Activated CD8-positive, alpha-beta memory T cell treated with anti-CD3 and anti-CD28 coated beads, Interleukin-2, amount 10 ng/mL, durations not matched to agents 7 days and 5 days (primary cell): ENCODE measurements at regions of chr22 and their contacts with region 1.

Region 1: DNA sequence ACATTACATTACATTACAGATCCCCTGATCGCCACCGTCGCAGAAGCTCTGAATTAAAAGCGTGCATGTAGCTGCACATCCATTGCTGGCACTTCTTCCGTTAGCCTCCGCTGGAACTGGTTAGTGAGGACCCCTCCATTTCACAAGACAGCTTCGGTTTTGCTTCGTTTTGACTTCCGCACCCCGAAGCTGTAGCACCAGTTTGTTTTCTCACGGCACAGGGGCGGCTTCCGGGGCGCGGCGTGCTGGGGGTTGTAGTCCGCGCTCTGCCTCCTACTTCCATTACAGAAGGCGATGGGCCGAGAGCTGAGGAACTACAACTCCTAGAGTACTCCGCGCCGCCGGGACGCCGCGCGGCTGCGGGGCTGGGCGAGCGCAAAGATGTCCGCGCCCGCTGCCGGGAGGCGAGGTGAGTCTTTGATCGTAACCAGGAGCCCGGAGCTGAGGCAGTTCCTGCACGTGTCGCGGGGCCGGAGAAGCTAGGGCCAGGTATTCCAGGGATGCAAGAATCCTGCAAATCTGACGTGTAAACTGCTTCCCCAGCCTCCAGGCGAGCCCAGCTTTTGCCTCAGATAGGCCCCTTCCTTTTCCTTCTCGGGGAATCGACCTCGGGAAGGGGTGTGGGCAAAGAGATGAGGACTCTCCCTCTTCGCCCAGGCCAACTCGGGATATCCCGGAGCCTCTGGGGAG is at the start of gene PEX26:
- DNase-seq: peak; percentile 98
- ATAC-seq: peak; percentile 99
- H3K4me3 Mint-ChIP-seq: peak within 1 kb of the TSS; percentile 97
- H3K27ac Mint-ChIP-seq: peak within 1 kb of the TSS; percentile 100
- H3K4me1 Mint-ChIP-seq: peaks cover 46% of the 10 kb centered on the region
- H3K27me3 Mint-ChIP-seq: no peaks in the 10 kb centered on the region
- total RNA-seq, gene PEX26: 38.9 to 46.8 TPM

Region 2: GRCh38 chr22:17785185-17786184 is 292.3 kb before region 1 on chr22:
- CTCF ChIA-PET with region 1: interaction called, 12 read pairs
- DNase-seq: peak; percentile 77
- ATAC-seq: peak; percentile 70
- H3K4me3 Mint-ChIP-seq: no peak overlapping the region
- H3K27ac Mint-ChIP-seq: no peak overlapping the region
- H3K4me1 Mint-ChIP-seq: peaks cover 15% of the 10 kb centered on the region
- H3K27me3 Mint-ChIP-seq: no peaks in the 10 kb centered on the region

Region 3: DNA sequence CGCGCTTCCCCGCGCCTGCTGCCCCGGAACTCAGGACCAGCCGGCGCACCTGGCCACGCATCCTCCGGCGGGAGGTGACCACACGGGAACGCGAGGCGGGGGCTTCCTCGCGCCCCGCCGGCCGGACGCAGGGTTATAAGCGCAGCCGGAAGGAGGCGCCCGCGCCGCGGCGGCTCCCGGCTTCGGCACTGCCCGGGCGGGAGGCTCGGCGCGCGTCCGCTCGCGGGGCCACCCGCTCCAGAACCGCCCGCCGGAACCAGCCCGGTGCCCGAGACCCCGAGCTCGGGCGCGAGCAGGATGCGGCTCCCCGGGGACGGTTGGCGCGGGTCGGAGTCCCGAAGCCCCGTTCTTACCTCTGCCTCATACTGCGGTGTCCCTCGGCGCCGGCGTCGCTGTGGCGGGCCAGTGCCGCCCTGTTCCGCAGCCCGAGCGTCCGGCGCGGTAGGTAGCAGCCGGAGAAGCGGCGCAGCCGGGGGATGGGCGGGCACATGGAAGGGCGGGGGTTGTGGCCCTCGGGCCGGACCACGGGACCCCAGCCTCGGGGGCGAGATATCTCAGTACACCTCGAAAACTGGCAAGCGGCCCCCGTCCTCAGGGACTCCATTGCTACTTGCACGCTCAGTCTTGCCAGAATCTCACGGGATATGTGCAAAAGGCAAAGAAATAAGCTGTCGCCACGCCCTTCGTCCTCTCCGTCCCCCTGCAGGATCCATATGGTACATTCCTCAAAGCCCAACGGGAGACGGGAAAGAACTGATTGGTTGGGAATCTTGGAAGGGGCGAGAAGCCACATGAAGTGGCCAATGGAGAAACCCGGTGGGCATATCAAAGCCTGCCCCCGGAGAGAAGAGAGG is 76.5 kb before region 1 on chr22:
- CTCF ChIA-PET with region 1: interaction called, 31 read pairs
- DNase-seq: peak; percentile 90
- ATAC-seq: peak; percentile 88
- H3K4me3 Mint-ChIP-seq: peak overlapping the region; percentile 91
- H3K27ac Mint-ChIP-seq: peak overlapping the region; percentile 95
- H3K4me1 Mint-ChIP-seq: peaks cover 49% of the 10 kb centered on the region
- H3K27me3 Mint-ChIP-seq: peaks cover 8% of the 10 kb centered on the region

Region 4: GRCh38 chr22:18056161-18056666 is 21.6 kb before region 1 on chr22:
- CTCF ChIA-PET with region 1: interaction called, 10 read pairs
- DNase-seq: no peak
- ATAC-seq: no peak
- H3K4me3 Mint-ChIP-seq: no peak overlapping the region
- H3K27ac Mint-ChIP-seq: no peak overlapping the region
- H3K4me1 Mint-ChIP-seq: peaks cover 23% of the 10 kb centered on the region
- H3K27me3 Mint-ChIP-seq: peaks cover 18% of the 10 kb centered on the region

Region 5: DNA sequence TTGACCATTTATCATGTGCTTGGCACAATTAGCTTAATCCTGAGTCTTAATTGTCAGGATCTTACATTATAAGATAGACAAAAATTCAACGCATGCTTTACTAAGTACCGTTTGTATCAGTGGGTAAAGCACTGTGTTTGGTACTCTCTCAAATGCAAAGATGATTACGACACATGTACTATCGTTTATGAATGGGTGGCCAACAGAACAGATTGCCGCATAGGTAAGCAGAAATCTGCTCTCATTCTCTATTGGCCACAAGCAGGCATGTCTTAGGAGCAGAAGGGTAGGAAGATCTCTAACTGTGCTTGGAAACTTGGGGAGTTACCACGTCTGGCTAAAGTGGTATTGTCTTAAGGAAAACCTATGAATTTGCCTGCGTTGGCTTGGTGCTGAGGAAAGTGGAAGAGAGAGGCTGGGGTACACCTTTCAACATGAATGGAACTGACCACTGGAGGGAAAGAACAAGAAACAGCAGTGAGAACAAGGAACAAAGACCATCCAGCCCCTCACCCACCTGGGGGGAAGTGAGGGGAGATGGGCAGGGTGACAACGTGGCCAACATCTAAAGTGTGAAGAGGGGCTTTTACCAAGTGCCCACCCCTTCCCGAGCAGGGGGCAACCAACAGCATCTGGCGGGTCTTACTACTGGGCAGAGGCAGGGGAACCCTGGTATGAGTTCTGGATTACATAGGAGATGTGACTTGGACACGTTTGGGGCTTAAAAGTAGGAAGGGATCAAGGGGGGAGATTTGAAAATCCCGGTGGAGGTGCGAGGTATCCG is 31.8 kb after region 1 on chr22:
- CTCF ChIA-PET with region 1: no interaction called
- DNase-seq: no peak
- ATAC-seq: no peak
- H3K4me3 Mint-ChIP-seq: peak overlapping the region; percentile 43
- H3K27ac Mint-ChIP-seq: no peak overlapping the region
- H3K4me1 Mint-ChIP-seq: peaks cover 29% of the 10 kb centered on the region
- H3K27me3 Mint-ChIP-seq: peaks cover 43% of the 10 kb centered on the region

Region 6: GRCh38 chr22:18152519-18152918 is 74.7 kb after region 1 on chr22:
- CTCF ChIA-PET with region 1: interaction called, 11 read pairs
- DNase-seq: peak; percentile 82
- ATAC-seq: peak; percentile 65
- H3K4me3 Mint-ChIP-seq: peak overlapping the region; percentile 87
- H3K27ac Mint-ChIP-seq: peak overlapping the region; percentile 96
- H3K4me1 Mint-ChIP-seq: peaks cover 64% of the 10 kb centered on the region
- H3K27me3 Mint-ChIP-seq: no peaks in the 10 kb centered on the region